GM13976 (cell line): ENCODE measurements at regions of chr5 and their contacts with region 1.

Region 1: GRCh38 chr5:76771705-76772405 is 47.0 kb upstream of the F2RL1 start:
- DNase-seq: no peak
- CTCF ChIP-seq: no peak

Region 2: GRCh38 chr5:76590027-76590426 is 181.8 kb before region 1 on chr5:
- in situ Hi-C with region 1: loop called (anchors 10 kb)
- DNase-seq: peak; percentile 42
- CTCF ChIP-seq: no peak

Region 3: GRCh38 chr5:76657683-76658311 is 114.1 kb before region 1 on chr5:
- in situ Hi-C with region 1: no loop called
- DNase-seq: no peak
- CTCF ChIP-seq: no peak